Mammary epithelial cell (primary cell): ENCODE measurements at regions of chr10 and their contacts with region 1.

Region 1: DNA sequence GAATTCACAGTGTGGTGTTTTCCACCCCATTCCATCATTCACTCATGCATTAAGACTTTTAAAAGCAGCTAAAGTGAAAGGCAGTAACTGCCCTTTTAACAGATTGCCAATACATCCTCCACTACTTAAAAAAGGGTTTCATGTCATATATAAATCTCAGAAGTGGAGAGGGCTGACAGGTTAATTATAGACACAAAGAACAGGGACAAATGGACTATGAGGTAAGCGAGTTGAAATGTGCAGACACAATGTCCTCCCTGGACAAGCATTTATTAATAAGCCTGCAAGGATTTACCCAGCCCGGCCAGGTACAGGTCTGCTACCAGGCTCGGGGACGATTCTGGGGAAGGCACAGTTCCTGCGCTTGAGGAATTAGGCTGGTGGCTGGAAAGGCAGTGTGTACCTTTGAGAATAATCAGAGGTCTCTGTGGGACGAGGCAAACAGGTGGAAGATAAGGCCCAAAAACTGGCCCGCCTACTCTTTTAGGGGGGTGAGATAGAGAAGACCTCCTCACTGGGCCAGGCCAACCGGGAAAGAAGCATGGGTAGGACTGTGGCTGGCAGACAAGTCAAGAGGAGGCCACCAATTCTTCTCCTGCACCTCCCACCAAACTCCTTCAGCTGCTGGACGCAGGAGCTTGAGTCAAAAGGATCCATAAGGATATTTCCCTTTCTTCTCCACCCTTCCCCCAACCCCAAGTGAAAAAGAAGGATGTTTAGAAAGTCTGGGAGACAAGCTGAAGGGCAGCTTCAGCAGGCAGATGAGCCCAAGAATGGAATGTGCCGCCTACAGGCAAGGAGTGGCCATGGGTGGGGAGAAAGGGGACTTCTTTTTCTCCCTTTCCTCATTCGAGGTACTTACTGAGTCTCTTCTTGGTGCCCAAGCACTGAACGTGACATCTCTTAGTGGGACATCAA is 1.5 kb downstream of the PDLIM1 start:
- DNase-seq: peak; percentile 42
- H3K4me3 ChIP-seq: peak overlapping the region; percentile 73 to 97 (median 75)
- H3K27ac ChIP-seq: peak overlapping the region; percentile 83
- H3K4me1 ChIP-seq: peaks cover 42% of the 10 kb centered on the region
- H3K27me3 ChIP-seq: no peaks in the 10 kb centered on the region
- CTCF ChIP-seq: peak; percentile 4 to 36

Region 2: DNA sequence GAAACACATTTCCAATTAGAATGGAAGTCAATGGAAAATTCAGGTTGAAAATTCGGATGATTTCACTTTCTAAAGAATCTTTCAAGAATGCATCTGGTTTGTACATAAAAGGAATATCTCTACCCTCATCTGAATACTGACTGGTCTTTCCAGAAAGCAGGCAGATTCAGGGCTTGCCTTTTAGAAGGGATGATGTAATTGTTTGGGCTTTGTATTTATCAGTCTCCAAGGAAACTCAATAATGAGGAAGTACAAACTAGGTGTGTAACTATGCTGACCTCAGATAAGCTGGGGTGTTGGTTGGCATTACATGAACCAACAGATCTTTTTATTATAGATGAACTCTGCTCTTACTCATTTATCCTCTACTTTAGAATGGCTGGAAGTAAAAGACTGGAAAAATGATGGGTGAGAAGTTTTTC is 22.6 kb before region 1 on chr10:
- CTCF ChIA-PET with region 1: no interaction called
- dilution Hi-C with region 1: no loop called
- in situ Hi-C with region 1: no loop called
- intact Hi-C with region 1: loop called (anchors 1 kb)
- DNase-seq: peak; percentile 97
- H3K4me3 ChIP-seq: no peak overlapping the region
- H3K27ac ChIP-seq: peak overlapping the region; percentile 99
- H3K4me1 ChIP-seq: peaks cover 50% of the 10 kb centered on the region
- H3K27me3 ChIP-seq: no peaks in the 10 kb centered on the region
- CTCF ChIP-seq: no peak

Region 3: GRCh38 chr10:95273393-95274312 is 15.6 kb before region 1 on chr10:
- CTCF ChIA-PET with region 1: no interaction called
- dilution Hi-C with region 1: no loop called
- in situ Hi-C with region 1: no loop called
- intact Hi-C with region 1: loop called (anchors 1 kb)
- DNase-seq: peak; percentile 87
- H3K4me3 ChIP-seq: peak overlapping the region in 2 of 3 experiments; percentile 4 to 35
- H3K27ac ChIP-seq: peak overlapping the region; percentile 88
- H3K4me1 ChIP-seq: peaks cover 63% of the 10 kb centered on the region
- H3K27me3 ChIP-seq: no peaks in the 10 kb centered on the region
- CTCF ChIP-seq: no peak

Region 4: GRCh38 chr10:95319239-95319638 is 30.0 kb after region 1 on chr10:
- CTCF ChIA-PET with region 1: no interaction called
- dilution Hi-C with region 1: no loop called
- in situ Hi-C with region 1: no loop called
- intact Hi-C with region 1: no loop called
- DNase-seq: no peak
- H3K4me3 ChIP-seq: no peak overlapping the region
- H3K27ac ChIP-seq: no peak overlapping the region
- H3K4me1 ChIP-seq: no peaks in the 10 kb centered on the region
- H3K27me3 ChIP-seq: no peaks in the 10 kb centered on the region
- CTCF ChIP-seq: no peak